Mammary epithelial cell (primary cell): ENCODE measurements at regions of chr2 and their contacts with region 1.

Region 1: GRCh38 chr2:55175254-55176025 is 56.7 kb downstream of the CLHC1 start:
- DNase-seq: peak; percentile 48
- H3K4me3 ChIP-seq: no peak overlapping the region
- H3K27ac ChIP-seq: no peak overlapping the region
- H3K4me1 ChIP-seq: no peaks in the 10 kb centered on the region
- H3K27me3 ChIP-seq: no peaks in the 10 kb centered on the region
- CTCF ChIP-seq: peak; percentile 57 to 63

Region 2: GRCh38 chr2:54657664-54658083 is 517.8 kb before region 1 on chr2:
- CTCF ChIA-PET with region 1: no interaction called
- dilution Hi-C with region 1: no loop called
- in situ Hi-C with region 1: no loop called
- intact Hi-C with region 1: loop called (anchors 5 kb)
- DNase-seq: no peak
- H3K4me3 ChIP-seq: no peak overlapping the region
- H3K27ac ChIP-seq: no peak overlapping the region
- H3K4me1 ChIP-seq: no peaks in the 10 kb centered on the region
- H3K27me3 ChIP-seq: no peaks in the 10 kb centered on the region
- CTCF ChIP-seq: peak; percentile 44 to 63

Region 3: GRCh38 chr2:54838585-54839035 is 336.8 kb before region 1 on chr2:
- CTCF ChIA-PET with region 1: no interaction called
- dilution Hi-C with region 1: no loop called
- in situ Hi-C with region 1: no loop called
- intact Hi-C with region 1: loop called (anchors 1 kb)
- DNase-seq: peak; percentile 50
- H3K4me3 ChIP-seq: no peak overlapping the region
- H3K27ac ChIP-seq: no peak overlapping the region
- H3K4me1 ChIP-seq: peaks cover 8% of the 10 kb centered on the region
- H3K27me3 ChIP-seq: no peaks in the 10 kb centered on the region
- CTCF ChIP-seq: peak; percentile 79 to 90

Region 4: DNA sequence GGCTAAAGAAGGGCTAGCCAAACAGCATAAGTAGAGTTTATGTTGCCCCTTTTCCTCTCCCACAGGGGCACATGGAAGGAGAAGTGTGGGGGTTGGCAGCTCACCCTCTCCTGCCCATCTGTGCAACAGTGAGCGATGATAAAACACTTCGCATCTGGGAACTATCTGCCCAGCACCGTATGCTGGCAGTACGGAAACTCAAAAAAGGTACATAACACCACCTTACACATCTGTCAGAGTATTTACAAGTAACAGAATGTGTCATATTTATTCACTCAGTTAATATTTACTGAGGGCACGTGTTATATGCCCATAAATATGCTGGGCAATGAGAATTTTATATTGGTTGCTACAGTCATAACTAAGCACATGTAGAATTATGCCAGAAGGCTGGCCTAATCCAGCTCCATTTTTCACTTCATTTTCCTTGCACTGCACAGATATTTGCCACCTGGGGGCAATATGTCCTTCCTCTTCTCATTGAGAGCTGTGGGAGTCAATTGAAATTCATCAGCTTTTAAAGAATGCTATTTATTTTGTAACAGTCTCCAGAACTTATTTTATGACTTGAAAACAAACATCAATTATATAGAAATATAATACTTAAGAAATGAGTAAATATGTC is 275.8 kb before region 1 on chr2:
- CTCF ChIA-PET with region 1: interaction called, 3 read pairs
- dilution Hi-C with region 1: no loop called
- in situ Hi-C with region 1: loop called in 1 of 2 experiments (anchors 10 kb)
- intact Hi-C with region 1: loop called (anchors 1 kb)
- DNase-seq: peak; percentile 53
- H3K4me3 ChIP-seq: no peak overlapping the region
- H3K27ac ChIP-seq: no peak overlapping the region
- H3K4me1 ChIP-seq: peaks cover 18% of the 10 kb centered on the region
- H3K27me3 ChIP-seq: no peaks in the 10 kb centered on the region
- CTCF ChIP-seq: peak; percentile 56 to 72

Region 5: DNA sequence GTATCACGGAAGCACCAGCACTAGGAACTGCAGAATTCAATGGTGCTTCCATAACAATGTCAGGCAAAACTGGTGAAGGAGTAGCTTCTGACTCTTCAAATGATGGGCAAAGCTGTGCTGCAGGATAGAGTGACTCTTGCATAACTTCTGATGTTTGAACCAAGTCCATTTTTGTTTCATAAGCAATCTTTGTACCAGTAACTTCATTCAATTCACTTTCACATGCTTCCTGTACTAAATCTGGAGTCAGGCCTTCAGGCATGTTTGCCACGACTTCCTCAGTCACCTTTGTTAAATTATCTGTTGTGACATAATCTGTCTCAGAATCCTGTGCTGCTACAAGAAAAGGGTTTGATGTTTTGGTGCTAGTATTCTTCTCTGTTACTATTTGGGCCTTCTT is 149.2 kb before region 1 on chr2:
- CTCF ChIA-PET with region 1: no interaction called
- dilution Hi-C with region 1: loop called (anchors 5 kb)
- in situ Hi-C with region 1: no loop called
- intact Hi-C with region 1: no loop called
- DNase-seq: peak; percentile 41
- H3K4me3 ChIP-seq: no peak overlapping the region
- H3K27ac ChIP-seq: peak overlapping the region; percentile 38
- H3K4me1 ChIP-seq: peaks cover 25% of the 10 kb centered on the region
- H3K27me3 ChIP-seq: no peaks in the 10 kb centered on the region
- CTCF ChIP-seq: no peak